ENCODE measurements at regions of chr18 and their contacts with region 1.

Region 1: GRCh38 chr18:3995476-3996102 is 459.5 kb downstream of the DLGAP1 start:
- H3K4me3 ChIP-seq: no peak overlapping the region
- H3K27ac ChIP-seq: no peak overlapping the region
- H3K4me1 ChIP-seq: no peaks in the 10 kb centered on the region
- CTCF ChIP-seq: no peak; the same call in 1 of the 2 replicates

Region 2: GRCh38 chr18:3688699-3689098 is 306.9 kb before region 1 on chr18:
- CTCF ChIA-PET with region 1: interaction called, 11 read pairs
- POLR2A ChIA-PET with region 1: no interaction called
- H3K4me3 ChIP-seq: no peak overlapping the region
- H3K27ac ChIP-seq: peak overlapping the region; percentile 54
- H3K4me1 ChIP-seq: peaks cover 18% of the 10 kb centered on the region
- CTCF ChIP-seq: no peak

Region 3: GRCh38 chr18:3832025-3832638 is 163.5 kb before region 1 on chr18:
- CTCF ChIA-PET with region 1: no interaction called
- POLR2A ChIA-PET with region 1: no interaction called
- H3K4me3 ChIP-seq: no peak overlapping the region
- H3K27ac ChIP-seq: no peak overlapping the region
- H3K4me1 ChIP-seq: no peaks in the 10 kb centered on the region
- CTCF ChIP-seq: no peak

Region 4: DNA sequence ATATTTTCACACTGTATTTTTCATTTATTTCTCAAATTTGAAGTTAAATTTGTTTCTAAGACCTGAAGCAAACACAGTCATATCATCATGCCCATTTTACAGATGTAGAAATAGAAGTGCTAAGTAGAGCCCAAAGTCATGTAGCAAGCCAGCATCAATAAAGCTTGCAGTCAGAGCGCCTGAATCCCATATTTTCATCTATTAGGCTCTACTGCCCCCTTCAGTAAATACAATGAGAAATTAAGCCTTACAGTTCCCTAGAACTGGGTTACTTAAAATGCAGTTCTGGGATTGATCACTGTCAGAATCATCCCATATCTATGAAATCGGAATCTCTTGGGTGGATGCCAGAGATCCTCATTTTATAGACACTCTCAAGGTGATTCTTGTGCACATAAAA is 125.7 kb before region 1 on chr18:
- CTCF ChIA-PET with region 1: interaction called, 43 read pairs
- POLR2A ChIA-PET with region 1: no interaction called
- H3K4me3 ChIP-seq: no peak overlapping the region
- H3K27ac ChIP-seq: no peak overlapping the region
- H3K4me1 ChIP-seq: peaks cover 6% of the 10 kb centered on the region
- CTCF ChIP-seq: 0 out of 2 replicates have a peak, but pooled peaks have one; percentile 19

Region 5: DNA sequence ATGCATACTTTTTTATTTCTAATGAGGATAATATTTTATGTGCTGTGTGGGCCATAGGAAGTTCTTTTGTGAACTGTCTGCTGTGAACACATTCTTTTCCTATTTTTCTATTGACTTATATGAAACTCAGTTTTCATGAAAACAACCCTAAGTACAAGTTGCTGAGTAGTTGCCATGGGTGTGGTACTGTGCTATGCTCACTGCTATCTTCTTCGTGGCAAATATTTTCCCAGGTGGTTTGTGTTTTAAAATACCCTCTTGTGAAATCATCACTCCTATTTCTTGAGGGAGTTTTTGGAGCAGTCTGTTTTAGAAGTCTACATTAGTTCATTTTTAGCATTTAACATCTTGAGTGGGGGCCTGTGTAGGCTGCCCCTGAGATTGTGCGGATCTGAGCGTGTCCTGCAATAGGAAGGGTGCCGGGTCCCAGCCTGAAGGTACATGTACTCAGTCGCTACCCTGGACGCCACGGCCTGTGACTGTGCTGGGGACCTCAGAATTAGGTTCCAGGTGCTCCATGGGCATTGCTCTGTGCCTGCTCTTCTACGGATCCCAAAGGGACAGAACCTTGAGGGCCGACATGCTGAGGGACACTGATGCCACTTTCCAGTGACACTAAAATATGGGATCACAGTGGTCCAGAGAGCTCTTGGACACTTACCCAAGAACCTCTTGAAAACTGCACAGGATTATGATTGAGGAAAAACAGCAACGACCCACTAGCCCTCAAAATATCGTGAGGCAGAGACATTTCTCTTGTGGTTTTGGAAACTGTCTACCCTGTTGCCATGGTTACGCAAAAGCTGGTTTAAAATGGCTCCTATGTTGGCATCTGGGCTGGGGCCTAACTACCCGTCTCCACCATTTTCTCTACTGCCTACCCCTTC is 65.2 kb before region 1 on chr18:
- CTCF ChIA-PET with region 1: interaction called, 13 read pairs
- POLR2A ChIA-PET with region 1: no interaction called
- H3K4me3 ChIP-seq: no peak overlapping the region
- H3K27ac ChIP-seq: no peak overlapping the region
- H3K4me1 ChIP-seq: no peaks in the 10 kb centered on the region
- CTCF ChIP-seq: no peak

Region 6: DNA sequence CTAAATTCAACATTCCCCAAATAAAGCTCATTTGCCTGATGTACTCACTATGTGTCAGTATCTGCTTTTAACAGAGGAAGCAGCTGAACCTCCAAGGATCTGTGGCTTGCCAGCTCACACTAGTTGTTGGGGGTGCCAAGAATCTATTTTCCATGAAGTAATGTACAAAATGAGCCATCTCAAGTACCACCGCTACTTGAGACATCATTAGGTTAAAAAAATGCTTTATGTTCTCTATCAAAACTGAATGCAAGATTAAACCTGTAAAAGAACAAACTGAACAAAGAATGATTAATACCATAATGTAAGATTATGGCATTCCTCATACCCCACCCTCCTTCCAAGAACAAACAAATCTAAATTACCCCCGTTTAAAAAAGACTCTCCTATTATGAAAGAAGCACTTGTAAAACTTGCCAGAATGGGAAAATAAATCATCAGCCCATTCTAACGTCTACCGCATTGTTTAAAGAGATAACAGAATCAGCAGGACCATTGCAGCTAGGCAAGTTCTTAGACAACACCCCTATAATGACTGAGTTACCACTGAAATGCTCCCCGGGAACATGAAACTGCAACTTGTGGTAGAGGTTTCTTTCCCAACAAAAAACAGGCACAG is 12.1 kb before region 1 on chr18:
- CTCF ChIA-PET with region 1: interaction called, 51 read pairs
- POLR2A ChIA-PET with region 1: interaction called, 3 read pairs
- H3K4me3 ChIP-seq: no peak overlapping the region
- H3K27ac ChIP-seq: peak overlapping the region; percentile 40; the same call in 1 of the 2 replicates
- H3K4me1 ChIP-seq: peaks cover 27% of the 10 kb centered on the region
- CTCF ChIP-seq: no peak

Measured in HEK293 (cell line).